ENCODE measurements at regions of chr19 and their contacts with region 1.

Region 1: DNA sequence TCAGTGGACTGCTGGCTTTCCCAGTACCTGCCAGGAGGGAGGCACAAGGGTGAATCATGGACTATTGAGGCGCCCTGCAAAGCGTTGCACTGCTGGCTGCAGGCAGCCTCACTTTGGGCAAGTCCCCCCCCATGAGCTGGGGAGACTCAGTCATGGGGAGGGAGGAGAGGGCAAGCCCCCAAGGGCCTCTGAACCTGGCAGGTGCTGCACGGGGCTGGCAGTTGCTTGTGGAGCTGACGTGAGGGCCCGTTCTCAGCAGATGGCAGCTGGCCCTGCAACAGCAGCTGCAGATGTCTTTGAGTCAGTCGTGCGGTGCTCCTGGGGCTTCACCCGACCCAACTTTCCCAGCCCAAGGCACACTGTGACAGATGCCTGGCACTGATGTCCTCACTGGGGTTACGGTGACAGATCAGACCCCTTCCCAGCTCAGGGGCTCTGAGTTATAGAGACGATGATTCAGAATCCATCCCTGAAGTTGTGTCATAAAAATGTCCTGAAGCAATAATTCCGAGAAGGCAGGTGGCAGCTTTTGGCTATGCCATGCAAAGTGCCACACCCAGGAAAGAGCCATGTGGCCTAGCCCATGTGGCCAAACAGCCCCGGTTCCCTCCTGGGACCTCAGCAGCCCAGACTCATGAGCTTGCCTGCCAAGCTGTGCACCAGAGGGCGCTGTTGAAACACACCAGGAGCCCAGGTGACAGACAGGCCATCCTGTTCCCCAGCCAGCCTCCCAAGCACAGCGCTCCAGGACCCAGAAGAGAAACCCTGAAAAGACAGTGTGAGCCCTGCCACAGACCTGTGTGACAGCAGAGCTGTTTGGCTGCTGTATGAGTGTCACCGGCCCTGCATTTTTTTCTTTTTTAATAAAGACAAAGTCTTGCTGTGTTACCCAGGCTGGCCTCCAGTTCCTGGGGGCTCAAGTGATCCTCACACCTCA is 53.6 kb upstream of the LDLR start:
- DNase-seq: peak; percentile 69 to 93
- H3K4me3 ChIP-seq: no peak overlapping the region
- H3K27ac ChIP-seq: no peak overlapping the region
- H3K4me1 ChIP-seq: no peaks in the 10 kb centered on the region
- H3K27me3 ChIP-seq: no peaks in the 10 kb centered on the region
- CTCF ChIP-seq: peak; percentile 92 to 99 (median 95)
- EP300 ChIP-seq: no peak
- POLR2A ChIP-seq: no peak
- RAD21 ChIP-seq: peak; percentile 77 to 87

Region 2: DNA sequence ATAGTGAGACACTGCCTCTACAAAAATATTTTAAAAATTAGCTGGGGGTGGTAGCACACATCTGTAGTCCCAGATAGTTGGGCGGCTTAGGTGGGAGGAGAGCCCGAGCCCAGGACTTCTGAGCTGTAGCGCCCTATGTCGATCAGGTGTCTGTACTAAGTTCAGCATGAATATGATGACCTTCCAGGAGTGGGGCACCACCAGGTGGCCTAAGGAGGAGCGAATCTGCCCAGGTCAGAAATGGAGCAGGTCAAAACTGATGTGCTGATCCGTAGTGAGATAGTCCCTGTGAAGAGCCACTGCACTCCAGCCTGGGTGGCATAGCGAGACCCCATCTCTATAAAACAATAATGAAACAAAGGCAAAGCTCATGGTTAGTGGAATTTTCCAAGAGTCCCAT is 24.0 kb before region 1 on chr19:
- CTCF ChIA-PET with region 1: interaction called, 10 read pairs
- POLR2A ChIA-PET with region 1: interaction called, 3 read pairs
- DNase-seq: no peak
- H3K4me3 ChIP-seq: no peak overlapping the region
- H3K27ac ChIP-seq: no peak overlapping the region
- H3K4me1 ChIP-seq: no peaks in the 10 kb centered on the region
- H3K27me3 ChIP-seq: no peaks in the 10 kb centered on the region
- CTCF ChIP-seq: no peak
- EP300 ChIP-seq: no peak
- POLR2A ChIP-seq: no peak
- RAD21 ChIP-seq: 0 out of 4 replicates have a peak, but pooled peaks of 1 of the 2 experiments have one; percentile 3

Region 3: DNA sequence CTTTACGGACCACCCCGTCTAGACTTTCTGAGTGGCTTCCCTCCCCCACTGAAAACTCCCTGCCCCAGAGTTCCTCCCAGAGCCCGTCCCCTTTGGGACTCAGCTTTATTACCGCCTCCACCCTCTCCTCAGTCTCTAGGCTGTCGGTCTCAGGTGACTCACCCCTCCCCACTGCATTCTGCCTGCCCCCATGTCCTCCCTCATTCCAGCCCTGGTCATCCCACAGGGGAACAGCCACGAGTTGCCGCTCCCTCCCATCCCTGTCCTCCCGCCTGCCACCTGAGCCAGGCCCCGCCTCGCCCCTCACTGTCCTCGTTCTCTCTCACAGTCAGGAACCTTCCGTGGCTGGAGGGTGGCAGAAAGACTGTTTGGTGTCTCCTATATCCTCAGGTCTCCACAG is 17.5 kb before region 1 on chr19:
- CTCF ChIA-PET with region 1: interaction called, 10 read pairs
- POLR2A ChIA-PET with region 1: interaction called, 3 read pairs
- DNase-seq: no peak
- H3K4me3 ChIP-seq: no peak overlapping the region
- H3K27ac ChIP-seq: no peak overlapping the region
- H3K4me1 ChIP-seq: no peaks in the 10 kb centered on the region
- H3K27me3 ChIP-seq: no peaks in the 10 kb centered on the region
- CTCF ChIP-seq: no peak
- EP300 ChIP-seq: no peak
- POLR2A ChIP-seq: no peak
- RAD21 ChIP-seq: no peak

Region 4: GRCh38 chr19:11025445-11025844 is 10.3 kb before region 1 on chr19:
- CTCF ChIA-PET with region 1: interaction called, 12 read pairs
- POLR2A ChIA-PET with region 1: interaction called, 3 read pairs
- DNase-seq: no peak
- H3K4me3 ChIP-seq: no peak overlapping the region
- H3K27ac ChIP-seq: no peak overlapping the region
- H3K4me1 ChIP-seq: no peaks in the 10 kb centered on the region
- H3K27me3 ChIP-seq: no peaks in the 10 kb centered on the region
- CTCF ChIP-seq: no peak
- EP300 ChIP-seq: no peak
- POLR2A ChIP-seq: no peak
- RAD21 ChIP-seq: no peak

Region 5: DNA sequence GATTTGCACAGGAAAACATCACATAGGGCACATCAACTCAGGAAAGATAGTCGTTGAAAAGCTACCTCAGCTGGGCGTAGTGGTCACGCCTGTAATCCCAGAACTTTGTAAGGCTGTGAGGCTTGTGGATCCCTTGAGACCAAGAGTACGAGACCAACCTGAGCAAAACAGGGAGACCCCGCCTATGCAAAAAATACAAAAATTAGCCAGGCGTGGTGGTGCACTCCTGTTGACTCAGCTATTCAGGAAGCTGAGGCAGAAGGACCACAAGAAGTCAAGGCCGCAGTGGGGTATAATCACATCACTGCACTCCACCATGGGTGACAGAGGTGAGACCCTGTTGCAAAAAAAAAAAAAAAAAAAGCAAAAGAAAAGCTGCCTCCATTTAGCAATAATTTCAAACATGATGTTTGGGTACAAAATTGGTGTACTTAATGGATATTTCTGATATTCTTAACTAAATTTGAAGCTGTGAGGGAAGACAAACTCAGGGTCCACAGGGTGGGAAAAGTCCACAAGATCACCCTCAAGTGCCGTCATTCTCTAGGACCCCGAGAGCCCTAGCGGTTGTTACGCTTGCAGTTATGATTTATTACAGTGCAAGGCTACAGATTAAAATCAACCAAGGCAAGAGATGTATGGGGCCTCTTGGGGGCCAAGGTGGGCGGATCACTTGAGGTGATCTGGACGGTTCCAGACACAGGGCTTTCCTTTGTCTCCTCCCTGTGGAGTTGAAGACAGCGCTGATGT is 11.1 kb after region 1 on chr19:
- CTCF ChIA-PET with region 1: interaction called, 14 read pairs
- POLR2A ChIA-PET with region 1: interaction called, 3 read pairs
- DNase-seq: no peak
- H3K4me3 ChIP-seq: no peak overlapping the region
- H3K27ac ChIP-seq: no peak overlapping the region
- H3K4me1 ChIP-seq: no peaks in the 10 kb centered on the region
- H3K27me3 ChIP-seq: no peaks in the 10 kb centered on the region
- CTCF ChIP-seq: no peak
- EP300 ChIP-seq: no peak
- POLR2A ChIP-seq: no peak
- RAD21 ChIP-seq: no peak

Region 6: GRCh38 chr19:11059511-11060358 is 24.0 kb after region 1 on chr19:
- CTCF ChIA-PET with region 1: interaction called, 16 read pairs
- POLR2A ChIA-PET with region 1: no interaction called
- DNase-seq: no peak
- H3K4me3 ChIP-seq: no peak overlapping the region
- H3K27ac ChIP-seq: no peak overlapping the region
- H3K4me1 ChIP-seq: no peaks in the 10 kb centered on the region
- H3K27me3 ChIP-seq: no peaks in the 10 kb centered on the region
- CTCF ChIP-seq: no peak
- EP300 ChIP-seq: no peak
- POLR2A ChIP-seq: no peak
- RAD21 ChIP-seq: no peak

Region 7: GRCh38 chr19:11090054-11090900 is 54.6 kb after region 1 on chr19:
- CTCF ChIA-PET with region 1: interaction called, 5 read pairs
- POLR2A ChIA-PET with region 1: interaction called, 12 read pairs
- DNase-seq: peak; percentile 83 to 92
- H3K4me3 ChIP-seq: peak overlapping the region; percentile 67 to 100 (median 94)
- H3K27ac ChIP-seq: peak overlapping the region; percentile 96
- H3K4me1 ChIP-seq: peaks cover 7 to 15% (median 10%) of the 10 kb centered on the region in 4 experiments
- H3K27me3 ChIP-seq: no peaks in the 10 kb centered on the region
- CTCF ChIP-seq: no peak
- EP300 ChIP-seq: no peak
- POLR2A ChIP-seq: peak; percentile 70 to 98
- RAD21 ChIP-seq: no peak